ENCODE measurements at regions of chr2 and their contacts with region 1.

Region 1: DNA sequence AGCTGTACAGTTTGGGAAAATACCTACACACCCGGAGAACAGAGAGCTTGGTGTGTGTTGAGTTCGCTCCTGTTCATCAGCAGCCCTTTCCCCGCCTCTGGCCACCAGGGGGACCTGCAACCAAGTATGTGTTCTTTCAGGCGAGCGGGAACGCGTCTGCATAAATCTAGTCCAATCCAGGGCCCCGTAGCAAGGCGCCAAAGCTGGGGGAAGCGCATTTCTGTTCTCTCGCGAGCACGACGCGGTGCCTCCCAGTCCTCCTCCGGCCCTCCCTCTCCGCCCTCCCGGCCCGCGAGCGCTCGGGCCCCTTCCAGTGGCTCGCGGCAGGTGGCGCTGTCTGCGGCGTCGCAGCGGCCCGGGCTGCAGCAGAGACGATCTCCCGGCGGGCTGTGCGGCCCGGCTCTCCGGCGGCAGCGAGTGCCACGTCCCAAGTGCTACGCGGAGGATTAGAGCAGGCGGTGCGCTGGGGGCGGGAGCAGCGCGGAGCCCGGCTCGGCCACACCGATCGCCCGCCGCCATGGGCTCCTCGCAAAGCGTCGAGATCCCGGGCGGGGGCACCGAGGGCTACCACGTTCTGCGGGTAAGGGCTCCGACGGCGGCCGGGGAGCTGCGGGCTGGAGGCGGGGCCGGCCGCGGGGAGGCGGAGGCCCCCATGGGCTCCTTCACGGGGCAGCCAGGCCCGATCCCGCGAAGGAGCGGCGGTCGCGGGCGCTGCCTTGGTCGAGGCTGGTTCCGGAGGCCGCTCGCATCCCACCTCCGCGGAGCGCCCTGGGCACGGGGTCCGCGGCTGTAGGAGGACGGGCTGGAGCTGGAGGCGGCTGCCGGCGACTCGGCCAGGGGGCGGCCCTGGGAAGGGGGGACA is at the start of gene GORASP2:
- DNase-seq: peak; percentile 99
- ATAC-seq: peak; percentile 94
- H3K4me3 Mint-ChIP-seq: peak within 1 kb of the TSS; percentile 96
- H3K27ac Mint-ChIP-seq: peak within 1 kb of the TSS; percentile 96
- H3K4me1 Mint-ChIP-seq: peaks cover 36% of the 10 kb centered on the region
- H3K27me3 Mint-ChIP-seq: no peaks in the 10 kb centered on the region
- total RNA-seq, gene GORASP2: 66.5 to 69.8 TPM

Region 2: GRCh38 chr2:169584005-169584877 is 1344.8 kb before region 1 on chr2 and contains the start of gene PPIG:
- CTCF ChIA-PET with region 1: no interaction called
- POLR2A ChIA-PET with region 1: no interaction called
- intact Hi-C with region 1: loop called in 1 of 2 experiments (anchors 2 kb)
- DNase-seq: peak; percentile 94
- ATAC-seq: peak; percentile 93
- H3K4me3 Mint-ChIP-seq: peak within 1 kb of the TSS; percentile 99
- H3K27ac Mint-ChIP-seq: peak within 1 kb of the TSS; percentile 99
- H3K4me1 Mint-ChIP-seq: peaks cover 34% of the 10 kb centered on the region
- H3K27me3 Mint-ChIP-seq: no peaks in the 10 kb centered on the region
- total RNA-seq, gene PPIG: 57.6 to 58.6 TPM

Region 3: DNA sequence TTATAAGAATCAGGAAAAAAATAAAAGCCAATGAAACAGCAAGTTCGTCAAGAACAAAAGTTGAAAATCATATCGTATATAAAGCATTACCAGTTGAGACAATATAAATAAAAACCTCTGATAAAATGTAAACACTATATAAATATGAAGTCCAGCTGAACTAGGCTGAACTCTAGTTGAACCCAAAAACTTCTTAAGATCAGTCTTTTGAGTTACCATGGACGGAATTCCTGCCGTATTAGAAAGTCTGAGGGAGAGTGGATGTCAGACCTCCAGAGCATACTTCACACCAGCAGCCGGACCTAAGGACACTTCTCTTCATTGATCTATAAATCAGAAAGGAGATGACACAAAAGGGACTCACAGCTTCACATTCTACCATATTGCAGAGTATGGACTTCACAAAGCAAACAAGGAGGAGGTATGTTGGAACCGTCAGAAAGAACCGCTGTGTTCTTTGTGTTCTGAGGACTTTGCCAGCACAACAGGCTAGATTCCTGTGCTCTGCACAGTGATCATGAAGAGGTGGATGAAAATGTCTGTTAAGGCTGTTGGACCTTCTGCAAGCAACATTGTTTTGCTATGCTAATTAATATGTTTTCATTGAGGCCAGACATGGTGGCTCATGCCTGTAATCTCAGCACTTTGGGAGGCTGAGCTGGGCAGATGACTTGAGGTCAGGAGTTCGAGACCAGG is 281.2 kb before region 1 on chr2:
- CTCF ChIA-PET with region 1: no interaction called
- POLR2A ChIA-PET with region 1: no interaction called
- intact Hi-C with region 1: no loop called
- DNase-seq: peak; percentile 4
- ATAC-seq: peak; percentile 16
- H3K4me3 Mint-ChIP-seq: no peak overlapping the region
- H3K27ac Mint-ChIP-seq: no peak overlapping the region
- H3K4me1 Mint-ChIP-seq: peaks cover 18% of the 10 kb centered on the region
- H3K27me3 Mint-ChIP-seq: peaks cover 5% of the 10 kb centered on the region

Region 4: DNA sequence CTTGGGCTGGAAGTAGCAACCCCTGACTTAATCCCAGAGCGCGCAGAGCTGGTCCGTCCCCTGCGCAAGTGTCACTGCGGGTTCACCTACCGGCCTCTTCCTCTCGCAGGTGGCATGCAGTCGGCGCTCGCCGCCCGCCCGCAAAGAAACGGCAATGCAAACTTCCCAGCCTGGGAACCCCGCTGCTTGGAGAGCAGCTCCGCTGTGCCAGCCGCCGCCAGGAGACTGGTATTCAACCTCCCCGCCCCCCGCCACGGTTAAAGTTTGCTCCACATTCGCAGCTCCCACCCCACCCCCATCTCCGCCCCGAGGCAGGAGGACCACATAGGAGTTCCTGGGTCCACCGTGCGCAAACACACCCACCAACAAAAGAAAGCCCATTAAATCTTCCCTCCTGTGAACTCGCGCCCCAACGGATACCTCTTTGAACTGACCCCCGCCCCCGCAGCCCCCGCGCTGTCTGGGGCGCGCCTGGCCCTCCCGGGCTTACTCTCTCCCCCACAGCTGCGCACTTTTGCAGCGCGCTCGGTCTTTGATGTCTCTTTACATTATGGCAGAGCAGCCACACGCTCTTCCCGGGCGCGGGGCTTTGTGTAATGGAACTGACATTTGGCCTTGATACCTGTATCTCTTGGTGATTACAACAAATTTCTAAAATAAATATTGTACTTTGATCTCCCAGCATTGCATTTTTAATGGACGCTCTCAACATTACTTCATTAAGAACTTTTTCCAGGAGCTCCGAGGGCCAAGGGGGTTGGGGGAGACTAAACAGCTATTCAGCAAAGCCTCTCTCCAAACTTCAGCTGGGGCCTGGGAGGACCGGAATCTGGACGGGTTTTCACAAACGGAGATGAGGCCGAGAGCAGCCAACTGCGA is 217.0 kb before region 1 on chr2:
- CTCF ChIA-PET with region 1: no interaction called
- POLR2A ChIA-PET with region 1: no interaction called
- intact Hi-C with region 1: no loop called
- DNase-seq: peak; percentile 32
- ATAC-seq: no peak
- H3K4me3 Mint-ChIP-seq: no peak overlapping the region
- H3K27ac Mint-ChIP-seq: no peak overlapping the region
- H3K4me1 Mint-ChIP-seq: peaks cover 24% of the 10 kb centered on the region
- H3K27me3 Mint-ChIP-seq: peaks cover 67% of the 10 kb centered on the region

Region 5: DNA sequence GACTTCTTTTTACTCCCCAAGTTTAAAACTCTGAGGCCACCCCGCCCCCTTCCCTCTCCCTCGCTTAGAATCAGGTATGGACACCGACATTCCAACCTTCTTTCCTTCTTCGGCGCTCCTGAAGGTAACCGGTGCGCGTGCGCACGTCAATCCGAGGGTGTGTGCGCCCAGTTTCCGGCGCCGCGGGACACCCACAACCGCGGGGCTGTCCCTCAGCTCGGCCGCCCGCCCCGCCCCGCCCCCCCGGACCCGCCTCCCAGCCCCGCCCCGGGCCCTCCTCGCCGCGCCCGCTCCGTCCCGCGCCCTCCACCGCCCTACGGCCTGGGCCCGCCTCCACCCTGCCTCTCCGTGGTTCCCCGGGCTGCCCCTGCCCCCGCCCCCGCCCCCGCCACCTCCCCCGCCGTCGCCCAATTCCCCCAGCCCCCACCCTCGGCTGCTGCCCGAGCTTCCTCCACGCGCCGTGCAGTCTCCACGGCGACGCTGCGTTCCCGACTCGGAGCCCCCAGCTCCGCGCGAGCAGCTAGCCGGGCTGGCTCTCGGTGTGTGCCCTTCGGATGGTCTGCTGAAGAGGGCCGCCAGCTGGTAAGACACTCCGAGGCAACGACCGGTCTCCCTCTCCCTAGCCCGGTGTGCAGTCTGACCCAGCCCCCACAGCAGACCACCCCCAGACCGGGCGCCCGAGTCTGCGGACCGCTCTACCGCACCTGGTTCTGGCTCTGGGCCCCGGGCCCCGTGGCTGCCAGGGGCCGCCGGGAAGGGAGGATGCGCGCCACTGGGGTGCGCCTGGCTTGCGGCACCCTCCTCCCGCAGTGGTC is 158.2 kb before region 1 on chr2:
- CTCF ChIA-PET with region 1: interaction called, 6 read pairs
- POLR2A ChIA-PET with region 1: no interaction called
- intact Hi-C with region 1: loop called (anchors 1 to 5 kb)
- DNase-seq: peak; percentile 83
- ATAC-seq: peak; percentile 88
- H3K4me3 Mint-ChIP-seq: peak overlapping the region; percentile 79
- H3K27ac Mint-ChIP-seq: peak overlapping the region; percentile 73
- H3K4me1 Mint-ChIP-seq: peaks cover 13% of the 10 kb centered on the region
- H3K27me3 Mint-ChIP-seq: peaks cover 8% of the 10 kb centered on the region

Region 6: DNA sequence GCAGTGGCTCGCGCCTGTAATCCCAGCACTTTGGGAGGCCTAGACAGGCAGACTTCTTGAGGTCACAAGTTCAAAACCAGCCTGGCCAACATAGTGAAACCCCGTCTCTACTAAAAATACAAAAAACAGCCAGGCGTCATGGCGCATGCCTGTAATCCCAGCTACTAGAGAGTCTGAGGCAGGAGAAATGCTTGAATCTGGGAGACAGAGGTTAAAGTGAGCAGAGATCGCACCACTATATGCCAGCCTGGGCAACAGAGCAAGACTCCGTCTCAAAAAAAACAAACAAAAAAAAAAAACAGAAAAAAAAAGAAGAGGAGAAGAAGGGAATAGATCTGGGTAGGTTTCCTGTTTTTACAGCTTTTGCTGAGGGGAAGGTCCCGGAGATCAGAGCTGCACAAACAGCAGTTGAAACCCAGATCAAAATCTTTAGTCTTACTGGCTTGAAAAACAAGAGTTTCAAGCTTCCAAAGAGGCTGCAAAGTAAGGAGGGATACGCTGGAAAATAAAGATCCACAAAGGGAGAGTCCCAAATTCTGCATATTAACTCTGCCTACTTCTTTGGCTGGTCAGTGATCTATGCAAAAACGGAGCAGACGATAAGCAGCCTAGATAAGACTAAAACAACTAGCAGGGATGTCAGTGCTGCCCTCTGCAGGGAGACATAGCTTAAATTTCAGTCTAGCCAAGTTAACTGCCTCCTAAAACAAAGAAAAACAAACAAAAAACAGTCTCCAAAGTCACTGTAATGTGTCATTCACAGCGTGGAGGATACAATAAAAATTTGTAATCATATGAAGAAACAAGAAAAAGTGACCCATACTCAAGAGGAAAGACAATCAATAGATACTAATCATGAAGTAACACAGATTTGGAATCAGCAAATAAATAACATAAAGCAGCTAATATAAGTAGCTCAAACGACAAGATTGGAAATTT is 157.6 kb after region 1 on chr2:
- CTCF ChIA-PET with region 1: interaction called, 14 read pairs
- POLR2A ChIA-PET with region 1: interaction called, 3 read pairs
- intact Hi-C with region 1: no loop called
- DNase-seq: peak; percentile 79
- ATAC-seq: peak; percentile 75
- H3K4me3 Mint-ChIP-seq: peak overlapping the region; percentile 69
- H3K27ac Mint-ChIP-seq: peak overlapping the region; percentile 73
- H3K4me1 Mint-ChIP-seq: peaks cover 71% of the 10 kb centered on the region
- H3K27me3 Mint-ChIP-seq: no peaks in the 10 kb centered on the region

Region 7: DNA sequence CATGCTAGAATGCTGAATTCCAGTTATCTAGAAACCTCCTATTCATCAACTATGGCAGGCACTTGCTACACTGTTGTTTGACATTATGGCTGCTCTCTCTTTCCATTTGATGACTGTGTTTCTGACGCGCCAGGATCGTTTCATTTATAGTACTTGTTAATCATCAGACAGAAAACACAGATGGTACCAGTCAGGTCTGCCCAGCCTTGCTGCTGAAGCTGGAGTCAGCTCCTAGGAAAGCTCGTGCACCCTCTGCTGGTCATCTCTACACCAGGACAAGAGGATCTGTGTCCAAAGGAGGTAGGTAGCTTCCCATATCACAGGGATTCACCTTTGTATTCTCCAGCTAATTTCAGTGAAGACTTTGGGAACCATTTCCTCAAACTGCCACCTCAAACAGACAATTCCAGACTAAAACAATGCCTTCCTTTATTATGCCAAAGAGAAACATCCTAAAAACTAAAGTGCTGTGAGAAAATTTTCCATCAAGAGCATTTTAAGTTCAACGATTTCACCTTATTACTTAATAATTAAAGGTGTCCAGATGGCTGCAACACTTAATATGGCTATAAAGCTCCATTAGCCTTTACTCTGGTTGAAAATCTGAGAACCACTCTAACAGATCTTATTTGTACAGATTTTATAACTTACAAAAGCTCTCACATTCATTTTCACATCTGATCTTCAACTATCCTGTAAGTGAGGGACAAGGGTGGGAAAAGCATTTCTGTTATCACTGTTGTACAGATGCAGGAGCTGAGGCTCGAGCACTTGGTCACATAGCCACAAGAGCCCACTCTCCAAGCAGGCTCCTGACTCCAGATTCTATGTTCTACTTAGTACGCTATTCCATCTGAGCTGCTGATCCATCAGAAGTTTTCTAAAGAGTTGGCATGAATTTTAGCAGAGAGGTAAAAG is 487.2 kb after region 1 on chr2:
- CTCF ChIA-PET with region 1: interaction called, 14 read pairs
- POLR2A ChIA-PET with region 1: no interaction called
- intact Hi-C with region 1: loop called (anchors 1 kb)
- DNase-seq: peak; percentile 93
- ATAC-seq: peak; percentile 98
- H3K4me3 Mint-ChIP-seq: peak overlapping the region; percentile 24
- H3K27ac Mint-ChIP-seq: peak overlapping the region; percentile 84
- H3K4me1 Mint-ChIP-seq: peaks cover 37% of the 10 kb centered on the region
- H3K27me3 Mint-ChIP-seq: no peaks in the 10 kb centered on the region

Region 8: DNA sequence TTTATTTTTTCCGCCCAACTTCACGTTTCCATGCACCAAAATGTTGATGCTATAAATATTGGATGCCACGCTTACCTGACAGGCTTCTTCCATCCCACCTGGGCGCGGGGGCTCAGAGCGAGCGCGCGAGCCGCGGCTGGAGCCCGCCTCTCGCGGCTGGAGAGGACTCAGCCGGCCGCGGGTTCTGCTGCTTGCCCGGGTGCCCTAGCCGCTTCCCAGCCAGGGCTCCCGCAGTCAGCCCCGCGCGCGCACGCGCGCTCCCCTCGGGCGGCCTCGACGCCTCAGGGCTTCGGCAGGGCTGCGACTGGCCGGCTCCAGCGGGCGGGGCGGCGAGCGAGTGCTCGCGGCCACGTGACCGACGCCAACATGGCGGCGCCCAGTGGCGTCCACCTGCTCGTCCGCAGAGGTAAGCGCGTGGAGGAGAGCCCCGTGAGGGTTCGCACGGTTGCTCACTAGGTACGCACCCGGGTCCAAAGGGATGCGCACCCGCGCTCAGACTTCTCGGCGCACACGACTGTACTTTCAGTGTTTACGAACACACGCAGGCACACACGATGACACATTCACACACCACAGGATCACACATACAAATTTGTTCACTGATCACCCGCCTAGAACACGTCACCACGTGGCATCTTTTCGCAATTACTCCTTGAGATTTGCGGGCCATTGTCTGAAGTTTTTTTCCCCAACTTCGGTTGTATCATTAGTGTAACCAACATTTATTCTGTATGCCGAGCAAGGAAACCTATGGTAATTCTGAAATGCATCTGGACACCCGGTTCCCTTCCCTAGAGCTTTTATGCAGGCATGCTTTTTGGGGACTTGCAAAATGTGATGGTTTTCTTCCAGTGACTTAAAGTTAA is 1070.8 kb after region 1 on chr2 and contains the start of gene METAP1D:
- CTCF ChIA-PET with region 1: no interaction called
- POLR2A ChIA-PET with region 1: no interaction called
- intact Hi-C with region 1: loop called in 1 of 2 experiments (anchors 2 kb)
- DNase-seq: peak; percentile 93
- ATAC-seq: peak; percentile 95
- H3K4me3 Mint-ChIP-seq: peak within 1 kb of the TSS; percentile 75
- H3K27ac Mint-ChIP-seq: peak within 1 kb of the TSS; percentile 87
- H3K4me1 Mint-ChIP-seq: peaks cover 18% of the 10 kb centered on the region
- H3K27me3 Mint-ChIP-seq: no peaks in the 10 kb centered on the region
- total RNA-seq, gene METAP1D: 5.3 to 6.0 TPM

Measured in activated CD4-positive, alpha-beta T cell treated with anti-CD3 and anti-CD28 coated beads for 36 hours (primary cell).